HCT116 (cell line): ENCODE measurements at regions of chr15 and their contacts with region 1.

Region 1: GRCh38 chr15:89740137-89740536 is 10.9 kb downstream of the MESP1 start:
- DNase-seq: peak; percentile 67
- ATAC-seq: peak; percentile 96
- H3K4me3 ChIP-seq: no peak overlapping the region
- H3K27ac ChIP-seq: no peak overlapping the region
- H3K4me1 ChIP-seq: 0 out of 4 replicates have a peak, but pooled peaks cover 0 to 9% of the 10 kb centered on the region in 2 experiments
- H3K27me3 ChIP-seq: no peaks in the 10 kb centered on the region
- CTCF ChIP-seq: peak; percentile 78 to 93 (median 89)
- POLR2A ChIP-seq: no peak
- RAD21 ChIP-seq: peak; percentile 91

Region 2: GRCh38 chr15:89750560-89751542 is 10.7 kb after region 1 on chr15 and contains the start of gene MESP1:
- CTCF ChIA-PET with region 1: interaction called, 10 read pairs
- POLR2A ChIA-PET with region 1: interaction called, 4 read pairs
- RAD21 ChIA-PET with region 1: no interaction called
- intact Hi-C with region 1: no loop called
- DNase-seq: peak; percentile 78
- ATAC-seq: peak; percentile 94
- H3K4me3 ChIP-seq: peak within 1 kb of the TSS; percentile 68 to 72
- H3K27ac ChIP-seq: peak within 1 kb of the TSS; percentile 74
- H3K4me1 ChIP-seq: peaks cover 4 to 23% of the 10 kb centered on the region in 2 experiments; a peak in 2 of 4 replicates
- H3K27me3 ChIP-seq: no peaks in the 10 kb centered on the region
- CTCF ChIP-seq: peak; percentile 53 to 63 (median 57); a peak in 5 of 6 replicates
- POLR2A ChIP-seq: peak; percentile 60
- RAD21 ChIP-seq: no peak; the same call in 1 of the 2 replicates
- total RNA-seq, gene MESP1: 8.8 TPM

Region 3: DNA sequence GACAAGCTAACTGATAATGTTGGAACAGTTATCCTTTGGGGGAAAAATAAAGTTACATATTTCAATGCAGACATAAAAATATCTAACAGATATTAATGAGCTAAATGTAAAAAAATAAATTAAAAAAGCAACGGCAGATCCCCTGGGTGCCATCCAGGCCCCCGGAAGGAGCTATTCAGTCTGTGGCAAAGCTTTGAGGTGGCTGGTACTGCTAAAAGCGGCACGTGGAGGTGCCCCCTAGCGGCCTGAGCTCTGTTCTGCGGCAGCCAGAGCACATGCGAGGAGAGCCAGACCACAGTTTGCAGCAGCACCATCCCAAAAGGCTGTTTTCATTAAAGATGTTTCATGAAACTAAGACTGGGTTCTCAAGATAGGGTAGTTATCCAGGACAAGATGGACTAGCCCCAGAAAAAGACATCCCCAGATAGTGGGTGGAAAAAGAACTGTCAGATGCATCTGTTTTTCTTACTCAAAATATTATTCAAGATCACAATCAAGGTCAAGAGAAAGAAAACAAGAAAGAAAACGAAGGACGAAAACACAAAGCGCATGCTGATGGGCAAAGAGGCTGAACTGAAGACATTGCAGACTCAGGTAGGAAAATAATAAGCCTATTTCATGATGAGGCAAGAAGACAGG is 134.9 kb after region 1 on chr15:
- CTCF ChIA-PET with region 1: interaction called, 50 read pairs
- POLR2A ChIA-PET with region 1: no interaction called
- RAD21 ChIA-PET with region 1: interaction called, 7 to 8 read pairs
- intact Hi-C with region 1: loop called (anchors 1 kb)
- DNase-seq: peak; percentile 43
- ATAC-seq: peak; percentile 100
- H3K4me3 ChIP-seq: no peak overlapping the region
- H3K27ac ChIP-seq: no peak overlapping the region
- H3K4me1 ChIP-seq: no peaks in the 10 kb centered on the region
- H3K27me3 ChIP-seq: no peaks in the 10 kb centered on the region
- CTCF ChIP-seq: peak; percentile 93 to 97 (median 96)
- POLR2A ChIP-seq: no peak
- RAD21 ChIP-seq: peak; percentile 88

Region 4: DNA sequence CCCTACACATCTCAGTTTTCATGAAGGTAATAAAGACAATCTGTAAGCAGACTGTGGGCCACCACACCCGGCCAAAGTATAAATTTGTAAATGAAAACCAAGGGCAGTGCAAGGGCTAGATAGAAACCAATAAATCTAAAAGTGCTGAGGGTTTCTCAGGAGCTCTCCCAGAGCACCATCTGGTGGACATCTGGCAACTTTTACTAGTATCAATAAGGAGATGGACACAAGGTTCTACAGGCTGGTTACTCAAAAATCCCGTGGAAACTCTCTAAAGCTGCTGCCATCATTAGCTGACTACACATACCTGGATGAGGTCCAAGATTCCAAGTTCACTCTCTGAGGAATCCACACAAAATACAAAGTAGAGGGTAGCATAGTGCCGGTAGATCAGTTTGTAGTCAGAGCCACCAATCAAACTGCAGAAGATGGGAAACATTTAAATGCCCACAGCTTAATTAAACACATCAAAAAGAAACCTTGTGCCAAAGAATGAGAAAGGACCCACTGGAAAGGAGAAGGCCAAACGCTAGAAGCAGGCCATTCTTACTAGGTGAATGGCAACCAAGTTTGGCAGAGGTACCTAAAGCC is 148.2 kb after region 1 on chr15:
- CTCF ChIA-PET with region 1: interaction called, 23 read pairs
- POLR2A ChIA-PET with region 1: interaction called, 3 read pairs
- RAD21 ChIA-PET with region 1: interaction called, 3 to 5 read pairs
- intact Hi-C with region 1: no loop called
- DNase-seq: peak; percentile 48
- ATAC-seq: peak; percentile 77
- H3K4me3 ChIP-seq: no peak overlapping the region
- H3K27ac ChIP-seq: no peak overlapping the region
- H3K4me1 ChIP-seq: peaks cover 0 to 5% of the 10 kb centered on the region in 2 experiments; a peak in 1 of 4 replicates
- H3K27me3 ChIP-seq: no peaks in the 10 kb centered on the region
- CTCF ChIP-seq: peak; percentile 57 to 73 (median 61)
- POLR2A ChIP-seq: no peak
- RAD21 ChIP-seq: peak; percentile 82

Region 5: GRCh38 chr15:90071208-90071807 is 331.2 kb after region 1 on chr15:
- CTCF ChIA-PET with region 1: interaction called, 8 read pairs
- POLR2A ChIA-PET with region 1: no interaction called
- RAD21 ChIA-PET with region 1: no interaction called
- intact Hi-C with region 1: loop called (anchors 5 kb)
- DNase-seq: peak; percentile 57
- ATAC-seq: peak; percentile 81
- H3K4me3 ChIP-seq: no peak overlapping the region
- H3K27ac ChIP-seq: no peak overlapping the region
- H3K4me1 ChIP-seq: peaks cover 16% of the 10 kb centered on the region in 2 experiments
- H3K27me3 ChIP-seq: no peaks in the 10 kb centered on the region
- CTCF ChIP-seq: peak; percentile 80 to 84 (median 83); a peak in 5 of 6 replicates
- POLR2A ChIP-seq: no peak
- RAD21 ChIP-seq: peak; percentile 88

Region 6: GRCh38 chr15:90086868-90087268 is 346.7 kb after region 1 on chr15:
- CTCF ChIA-PET with region 1: interaction called, 14 read pairs
- POLR2A ChIA-PET with region 1: no interaction called
- RAD21 ChIA-PET with region 1: interaction called, 3 to 5 read pairs
- intact Hi-C with region 1: loop called (anchors 1 kb)
- DNase-seq: no peak
- ATAC-seq: peak; percentile 85
- H3K4me3 ChIP-seq: no peak overlapping the region
- H3K27ac ChIP-seq: no peak overlapping the region
- H3K4me1 ChIP-seq: peaks cover 0 to 13% of the 10 kb centered on the region in 2 experiments; a peak in 2 of 4 replicates
- H3K27me3 ChIP-seq: no peaks in the 10 kb centered on the region
- CTCF ChIP-seq: peak; percentile 83 to 95 (median 91)
- POLR2A ChIP-seq: no peak
- RAD21 ChIP-seq: peak; percentile 89

Region 7: DNA sequence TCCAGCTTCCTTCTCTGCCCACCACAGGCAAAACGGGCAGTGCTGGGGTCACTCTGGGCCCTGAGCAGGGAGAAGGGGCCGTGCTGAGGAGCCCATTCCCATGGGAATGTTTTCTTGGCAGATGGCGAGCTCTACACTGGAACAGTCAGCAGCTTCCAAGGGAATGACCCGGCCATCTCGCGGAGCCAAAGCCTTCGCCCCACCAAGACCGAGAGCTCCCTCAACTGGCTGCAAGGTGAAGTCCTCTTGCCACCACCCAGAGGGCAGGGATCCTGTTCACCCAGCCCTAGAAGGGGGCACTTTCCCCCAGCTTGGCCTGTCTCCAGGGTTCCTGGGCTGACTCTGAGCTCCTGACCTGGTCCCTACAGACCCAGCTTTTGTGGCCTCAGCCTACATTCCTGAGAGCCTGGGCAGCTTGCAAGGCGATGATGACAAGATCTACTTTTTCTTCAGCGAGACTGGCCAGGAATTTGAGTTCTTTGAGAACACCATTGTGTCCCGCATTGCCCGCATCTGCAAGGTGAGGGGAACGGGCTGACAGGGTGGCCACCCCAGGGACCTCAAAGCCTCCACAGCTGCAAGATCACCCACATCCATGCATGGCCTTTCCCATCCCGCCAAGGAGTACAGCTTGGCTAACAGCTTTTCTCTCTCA is 481.2 kb after region 1 on chr15:
- CTCF ChIA-PET with region 1: no interaction called
- POLR2A ChIA-PET with region 1: no interaction called
- RAD21 ChIA-PET with region 1: no interaction called
- intact Hi-C with region 1: loop called (anchors 10 kb)
- DNase-seq: no peak
- ATAC-seq: peak; percentile 89
- H3K4me3 ChIP-seq: no peak overlapping the region
- H3K27ac ChIP-seq: no peak overlapping the region; the same call in 1 of the 2 replicates
- H3K4me1 ChIP-seq: peaks cover 0 to 16% of the 10 kb centered on the region in 2 experiments; a peak in 3 of 4 replicates
- H3K27me3 ChIP-seq: no peaks in the 10 kb centered on the region
- CTCF ChIP-seq: peak in 2 of 3 experiments; percentile 70 to 76; a peak in 4 of 6 replicates
- POLR2A ChIP-seq: no peak
- RAD21 ChIP-seq: no peak